HepG2 (cell line): ENCODE measurements at regions of chr10 and their contacts with region 1.

Region 1: DNA sequence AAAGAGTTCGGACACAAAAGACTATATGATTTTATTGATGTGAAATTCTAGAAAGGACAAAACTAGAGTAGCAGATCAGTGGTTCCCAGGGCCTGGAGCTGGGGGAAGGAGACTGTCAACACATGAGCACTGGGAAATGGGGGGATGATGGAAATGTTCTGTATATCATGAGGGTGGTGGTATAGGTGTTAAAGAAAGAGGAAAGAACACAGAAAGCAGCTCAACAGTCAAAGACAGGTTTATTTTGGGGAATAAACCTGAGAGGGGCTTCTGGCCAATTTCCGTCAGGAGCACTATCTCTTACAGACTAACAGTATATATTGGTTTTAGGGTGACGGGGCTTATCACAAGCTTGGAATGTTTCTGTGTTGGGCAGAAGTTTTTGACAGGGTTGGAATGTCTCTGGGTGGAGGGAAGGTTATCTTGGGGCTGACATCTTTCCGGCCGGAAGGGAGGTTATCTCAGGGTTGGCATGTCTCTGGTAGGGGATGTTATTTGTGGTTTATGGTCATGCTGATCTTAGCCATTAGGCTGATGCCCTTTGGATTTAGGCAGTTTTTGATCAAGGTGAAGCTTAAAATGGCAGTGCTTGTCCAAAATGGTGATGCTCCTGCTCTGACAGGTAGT is 254.6 kb upstream of the NRP1 start:
- DNase-seq: no peak
- ATAC-seq: no peak
- H3K4me3 ChIP-seq: no peak overlapping the region
- H3K27ac ChIP-seq: no peak overlapping the region
- H3K4me1 ChIP-seq: no peaks in the 10 kb centered on the region
- H3K27me3 ChIP-seq: peaks cover 0 to 14% of the 10 kb centered on the region in 2 experiments; a peak in 1 of 5 replicates
- CTCF ChIP-seq: no peak
- EP300 ChIP-seq: no peak
- POLR2A ChIP-seq: no peak
- RAD21 ChIP-seq: no peak

Region 2: DNA sequence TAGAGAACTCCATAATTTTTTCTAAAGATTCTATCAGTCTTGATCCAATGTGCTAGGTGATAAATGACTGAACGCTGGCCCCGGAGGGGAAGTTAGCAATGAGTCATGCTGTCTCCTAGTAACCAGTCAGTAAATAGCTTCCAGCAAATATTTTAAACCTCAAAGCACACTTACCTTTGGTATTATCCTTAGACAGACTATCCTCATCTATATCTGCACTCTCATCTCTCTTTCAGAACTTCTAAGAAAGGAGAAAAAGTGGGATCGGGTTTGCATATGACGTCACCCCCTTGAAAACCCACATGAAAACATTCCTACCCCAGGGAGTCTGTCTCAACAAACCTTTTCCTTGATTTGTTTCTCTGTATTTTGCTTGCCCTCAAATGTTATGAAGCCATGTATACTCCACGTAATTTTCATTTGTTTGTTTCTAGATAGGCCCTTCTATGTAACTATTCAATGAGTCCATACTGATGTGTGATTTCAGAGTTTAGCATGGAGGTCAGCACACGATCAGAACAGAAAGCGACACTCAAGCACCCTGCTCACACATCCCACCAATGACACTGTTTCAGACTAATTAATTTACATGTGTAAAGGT is 79.8 kb before region 1 on chr10:
- CTCF ChIA-PET with region 1: no interaction called
- POLR2A ChIA-PET with region 1: no interaction called
- in situ Hi-C with region 1: no loop called
- intact Hi-C with region 1: no loop called
- DNase-seq: peak; percentile 92
- ATAC-seq: peak; percentile 90
- H3K4me3 ChIP-seq: peak overlapping the region; percentile 20 to 55 (median 40); a peak in 5 of 6 replicates
- H3K27ac ChIP-seq: peak overlapping the region; percentile 93
- H3K4me1 ChIP-seq: peaks cover 37% of the 10 kb centered on the region
- H3K27me3 ChIP-seq: no peaks in the 10 kb centered on the region
- CTCF ChIP-seq: no peak
- EP300 ChIP-seq: peak; percentile 85 to 90
- POLR2A ChIP-seq: peak in 1 of 2 experiments; percentile 33; a peak in 1 of 4 replicates
- RAD21 ChIP-seq: no peak

Region 3: GRCh38 chr10:33524966-33525365 is 64.1 kb before region 1 on chr10:
- CTCF ChIA-PET with region 1: no interaction called
- POLR2A ChIA-PET with region 1: no interaction called
- in situ Hi-C with region 1: no loop called
- intact Hi-C with region 1: loop called (anchors 2 kb)
- DNase-seq: no peak
- ATAC-seq: no peak
- H3K4me3 ChIP-seq: no peak overlapping the region
- H3K27ac ChIP-seq: no peak overlapping the region
- H3K4me1 ChIP-seq: no peaks in the 10 kb centered on the region
- H3K27me3 ChIP-seq: no peaks in the 10 kb centered on the region
- CTCF ChIP-seq: no peak
- EP300 ChIP-seq: no peak
- POLR2A ChIP-seq: no peak
- RAD21 ChIP-seq: no peak

Region 4: DNA sequence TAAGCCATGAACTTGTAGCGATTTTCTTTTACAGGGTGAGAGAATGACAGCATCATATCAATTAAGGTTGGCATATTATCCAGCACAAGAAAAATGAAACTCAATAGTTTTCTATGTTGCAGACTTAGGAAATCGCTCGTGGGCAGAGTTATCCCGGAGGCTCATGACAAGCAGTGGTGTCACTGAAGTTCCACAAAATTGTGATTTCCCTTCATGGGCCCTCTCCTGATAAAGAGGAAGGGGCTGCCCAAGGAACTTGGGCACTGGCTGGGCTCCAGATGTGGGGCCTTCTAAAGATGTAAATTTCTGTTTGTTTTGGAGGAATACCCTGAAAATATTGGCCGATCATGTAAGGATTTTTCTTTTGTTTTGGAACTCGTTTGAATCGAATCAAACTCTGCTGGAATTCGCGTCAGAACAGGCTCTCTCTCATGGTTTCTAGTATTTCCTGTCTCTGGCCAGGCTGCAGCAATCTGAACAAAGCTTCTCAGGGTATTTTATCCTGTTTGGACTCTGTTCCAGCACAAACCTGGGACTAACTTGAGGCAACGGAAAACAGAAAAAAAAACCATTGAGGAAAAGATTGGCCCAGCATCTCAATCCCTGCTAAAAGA is 86.0 kb after region 1 on chr10:
- CTCF ChIA-PET with region 1: no interaction called
- POLR2A ChIA-PET with region 1: no interaction called
- in situ Hi-C with region 1: no loop called
- intact Hi-C with region 1: no loop called
- DNase-seq: no peak
- ATAC-seq: no peak
- H3K4me3 ChIP-seq: no peak overlapping the region
- H3K27ac ChIP-seq: no peak overlapping the region
- H3K4me1 ChIP-seq: no peaks in the 10 kb centered on the region
- H3K27me3 ChIP-seq: 0 out of 5 replicates have a peak, but pooled peaks cover 0 to 3% of the 10 kb centered on the region in 2 experiments
- CTCF ChIP-seq: no peak
- EP300 ChIP-seq: no peak
- POLR2A ChIP-seq: no peak
- RAD21 ChIP-seq: no peak